HCT116 (cell line): ENCODE measurements at regions of chr11 and their contacts with region 1.

Region 1: DNA sequence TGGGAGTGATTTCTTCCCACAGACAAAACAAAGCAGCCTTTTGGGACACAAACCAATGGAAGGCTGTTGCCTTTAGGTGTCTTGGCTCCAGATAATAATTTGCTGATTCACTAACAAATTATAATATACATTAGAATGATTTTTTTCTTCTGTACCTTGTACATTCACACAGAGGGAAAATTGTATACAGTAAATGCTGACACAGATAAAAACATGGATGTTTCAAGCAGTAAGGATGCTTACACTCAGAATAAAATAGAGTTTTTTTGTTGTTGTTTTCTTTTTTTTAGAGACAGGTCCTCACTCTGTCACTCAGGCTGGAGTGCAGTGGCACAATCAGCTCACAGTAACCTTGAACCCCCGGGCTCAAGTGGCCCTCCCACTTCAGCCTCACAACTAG is 109.2 kb upstream of the TRPC6 start:
- DNase-seq: no peak
- ATAC-seq: no peak
- H3K4me3 ChIP-seq: no peak overlapping the region
- H3K27ac ChIP-seq: no peak overlapping the region
- H3K4me1 ChIP-seq: no peaks in the 10 kb centered on the region
- H3K27me3 ChIP-seq: no peaks in the 10 kb centered on the region
- CTCF ChIP-seq: no peak
- POLR2A ChIP-seq: no peak
- RAD21 ChIP-seq: no peak

Region 2: GRCh38 chr11:101718402-101718801 is 25.4 kb after region 1 on chr11:
- CTCF ChIA-PET with region 1: no interaction called
- POLR2A ChIA-PET with region 1: no interaction called
- RAD21 ChIA-PET with region 1: no interaction called
- intact Hi-C with region 1: loop called (anchors 2 kb)
- DNase-seq: no peak
- ATAC-seq: no peak
- H3K4me3 ChIP-seq: no peak overlapping the region
- H3K27ac ChIP-seq: no peak overlapping the region
- H3K4me1 ChIP-seq: no peaks in the 10 kb centered on the region
- H3K27me3 ChIP-seq: no peaks in the 10 kb centered on the region
- CTCF ChIP-seq: no peak
- POLR2A ChIP-seq: no peak
- RAD21 ChIP-seq: no peak